Natural killer cell (primary cell): ENCODE measurements at regions of chr4 and their contacts with region 1.

Region 1: GRCh38 chr4:13627606-13628301 is at the start of gene BOD1L1:
- DNase-seq: peak; percentile 73 to 91
- ATAC-seq: peak; percentile 78 to 86 (median 84)
- H3K4me3 ChIP-seq: peak within 1 kb of the TSS; percentile 74
- H3K4me3 Mint-ChIP-seq: peak within 1 kb of the TSS; percentile 98
- H3K27ac ChIP-seq: peak within 1 kb of the TSS; percentile 78
- H3K27ac Mint-ChIP-seq: peak within 1 kb of the TSS; percentile 97
- H3K4me1 ChIP-seq: peaks cover 18% of the 10 kb centered on the region
- H3K4me1 Mint-ChIP-seq: peaks cover 45 to 48% of the 10 kb centered on the region in 2 donors
- H3K27me3 ChIP-seq: no peaks in the 10 kb centered on the region
- H3K27me3 Mint-ChIP-seq: peaks cover 0 to 2% of the 10 kb centered on the region in 2 donors
- CTCF ChIP-seq: peak; percentile 19
- total RNA-seq, gene BOD1L1: 62.2 to 69.1 (median 67.7) TPM

Region 2: GRCh38 chr4:13484122-13484748 is 143.5 kb before region 1 on chr4 and contains the start of gene RAB28:
- intact Hi-C with region 1: loop called (anchors 10 kb)
- DNase-seq: peak; percentile 94 to 96
- ATAC-seq: peak; percentile 87 to 97 (median 88)
- H3K4me3 ChIP-seq: peak within 1 kb of the TSS; percentile 58
- H3K4me3 Mint-ChIP-seq: peak within 1 kb of the TSS; percentile 92
- H3K27ac ChIP-seq: peak within 1 kb of the TSS; percentile 91
- H3K27ac Mint-ChIP-seq: peak within 1 kb of the TSS; percentile 98 to 99
- H3K4me1 ChIP-seq: peaks cover 18% of the 10 kb centered on the region
- H3K4me1 Mint-ChIP-seq: peaks cover 20 to 27% of the 10 kb centered on the region in 2 donors
- H3K27me3 ChIP-seq: peaks cover 3% of the 10 kb centered on the region
- H3K27me3 Mint-ChIP-seq: peaks cover 13 to 28% of the 10 kb centered on the region in 2 donors
- CTCF ChIP-seq: no peak
- total RNA-seq, gene RAB28: 10.2 to 13.1 (median 12.9) TPM

Region 3: GRCh38 chr4:13580036-13580435 is 47.7 kb before region 1 on chr4:
- intact Hi-C with region 1: no loop called
- DNase-seq: no peak
- ATAC-seq: no peak
- H3K4me3 ChIP-seq: no peak overlapping the region
- H3K4me3 Mint-ChIP-seq: no peak overlapping the region
- H3K27ac ChIP-seq: no peak overlapping the region
- H3K27ac Mint-ChIP-seq: no peak overlapping the region
- H3K4me1 ChIP-seq: no peaks in the 10 kb centered on the region
- H3K4me1 Mint-ChIP-seq: peaks cover 7 to 10% of the 10 kb centered on the region in 2 donors
- H3K27me3 ChIP-seq: no peaks in the 10 kb centered on the region
- H3K27me3 Mint-ChIP-seq: no peaks in the 10 kb centered on the region
- CTCF ChIP-seq: no peak